Panc1 (cell line): ENCODE measurements at regions of chr3 and their contacts with region 1.

Region 1: DNA sequence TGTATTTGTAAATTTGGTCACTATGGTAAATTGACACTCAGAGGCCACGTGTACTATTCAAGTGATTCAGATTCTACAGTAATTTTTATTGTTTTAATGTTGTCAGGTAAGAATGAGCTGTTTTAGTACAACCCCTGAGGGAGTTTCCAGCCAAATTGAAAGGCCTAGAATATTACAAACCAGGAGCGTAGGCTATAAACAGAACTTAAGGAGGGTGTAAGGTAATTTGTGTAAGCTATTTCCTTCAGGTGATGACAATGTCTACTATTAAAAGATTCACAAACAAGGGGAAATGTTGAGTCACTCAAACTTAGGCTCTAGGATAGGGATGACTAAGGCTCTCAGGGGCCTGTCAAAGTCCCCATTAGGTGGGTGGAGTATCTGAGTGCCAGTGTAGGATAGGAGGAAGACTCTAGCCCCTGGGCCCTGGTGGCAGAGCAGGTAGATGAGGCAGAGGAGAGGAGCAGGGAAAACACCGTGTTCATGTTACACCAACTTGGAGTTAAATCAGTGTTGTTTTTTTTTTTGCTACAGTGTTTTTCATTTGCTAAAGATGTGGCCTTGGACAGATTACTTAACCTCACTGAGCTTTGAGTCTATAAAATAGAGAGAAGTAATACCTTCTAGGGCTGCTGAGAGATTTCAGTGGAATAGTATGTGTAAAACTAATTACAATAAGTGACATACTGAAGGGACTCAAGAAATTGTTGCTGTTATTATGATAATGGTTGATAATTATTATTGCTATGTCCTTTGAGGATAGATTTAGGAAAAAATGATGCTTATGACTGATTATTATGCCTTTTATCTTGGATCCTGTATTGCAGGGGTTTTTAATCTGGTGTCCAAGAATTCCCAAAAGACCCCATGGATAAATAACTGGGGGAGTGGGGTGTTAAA is 10.3 kb downstream of the TM4SF1 start:
- DNase-seq: peak; percentile 96
- ATAC-seq: peak; percentile 83
- H3K4me3 ChIP-seq: no peak overlapping the region
- H3K27ac ChIP-seq: peak overlapping the region; percentile 100
- H3K4me1 ChIP-seq: peaks cover 74% of the 10 kb centered on the region
- H3K27me3 ChIP-seq: no peaks in the 10 kb centered on the region
- CTCF ChIP-seq: no peak

Region 2: DNA sequence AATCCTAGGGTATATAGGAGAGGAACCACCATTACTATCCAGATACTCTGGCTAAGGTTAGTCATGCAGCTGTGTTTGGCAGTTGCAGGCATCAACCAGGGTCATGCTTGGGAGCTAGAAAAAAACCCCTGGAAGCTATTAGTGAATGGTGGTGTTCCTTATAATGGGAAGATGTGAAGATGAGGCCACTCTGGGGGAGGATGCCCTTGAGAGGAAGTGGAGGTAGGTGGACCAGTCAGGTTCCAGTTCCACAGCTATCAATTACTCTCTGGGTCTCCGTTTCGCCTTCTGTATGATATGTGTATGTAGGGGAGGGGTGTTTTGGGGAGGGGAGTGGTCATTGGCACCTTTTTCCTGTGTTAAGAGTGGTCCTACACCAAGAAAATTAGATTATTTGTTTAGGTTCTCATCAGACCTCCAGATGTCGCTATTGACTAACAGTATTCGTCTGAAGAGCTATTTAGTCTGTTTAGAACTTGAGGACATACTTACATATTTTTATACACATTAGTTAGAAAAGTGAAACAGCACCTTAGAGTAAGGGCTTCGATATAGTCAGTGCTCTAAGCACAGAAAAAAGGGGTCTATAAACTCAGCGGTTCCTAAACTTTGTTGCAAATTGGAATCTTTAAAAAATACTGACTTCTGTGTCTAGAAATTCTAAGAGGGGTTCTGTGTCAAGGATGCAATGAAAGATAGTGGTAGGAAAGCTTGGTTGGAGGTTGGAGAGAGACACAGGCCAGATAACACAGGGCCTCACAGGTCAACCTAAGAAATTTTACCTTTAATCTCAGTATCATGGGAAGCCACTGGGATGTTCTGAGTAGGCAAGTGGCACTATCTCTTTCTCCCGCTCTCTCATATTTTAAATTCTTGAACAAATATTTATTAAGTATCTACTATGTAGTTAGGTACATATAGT is 246.9 kb before region 1 on chr3:
- CTCF ChIA-PET with region 1: interaction called, 3 read pairs
- POLR2A ChIA-PET with region 1: interaction called, 10 read pairs
- in situ Hi-C with region 1: no loop called
- intact Hi-C with region 1: loop called (anchors 2 kb)
- DNase-seq: peak; percentile 76
- ATAC-seq: peak; percentile 87
- H3K4me3 ChIP-seq: no peak overlapping the region
- H3K27ac ChIP-seq: peak overlapping the region; percentile 79
- H3K4me1 ChIP-seq: peaks cover 4% of the 10 kb centered on the region
- H3K27me3 ChIP-seq: no peaks in the 10 kb centered on the region
- CTCF ChIP-seq: peak; percentile 75

Region 3: GRCh38 chr3:149299938-149300791 is 67.0 kb before region 1 on chr3:
- CTCF ChIA-PET with region 1: no interaction called
- POLR2A ChIA-PET with region 1: interaction called, 4 read pairs
- in situ Hi-C with region 1: no loop called
- intact Hi-C with region 1: loop called (anchors 5 kb)
- DNase-seq: peak; percentile 96
- ATAC-seq: peak; percentile 96
- H3K4me3 ChIP-seq: peak overlapping the region in 1 of 2 experiments; percentile 28; a peak in 2 of 4 replicates
- H3K27ac ChIP-seq: peak overlapping the region; percentile 99
- H3K4me1 ChIP-seq: peaks cover 41% of the 10 kb centered on the region
- H3K27me3 ChIP-seq: no peaks in the 10 kb centered on the region
- CTCF ChIP-seq: 0 out of 2 replicates have a peak, but pooled peaks have one; percentile 5

Region 4: DNA sequence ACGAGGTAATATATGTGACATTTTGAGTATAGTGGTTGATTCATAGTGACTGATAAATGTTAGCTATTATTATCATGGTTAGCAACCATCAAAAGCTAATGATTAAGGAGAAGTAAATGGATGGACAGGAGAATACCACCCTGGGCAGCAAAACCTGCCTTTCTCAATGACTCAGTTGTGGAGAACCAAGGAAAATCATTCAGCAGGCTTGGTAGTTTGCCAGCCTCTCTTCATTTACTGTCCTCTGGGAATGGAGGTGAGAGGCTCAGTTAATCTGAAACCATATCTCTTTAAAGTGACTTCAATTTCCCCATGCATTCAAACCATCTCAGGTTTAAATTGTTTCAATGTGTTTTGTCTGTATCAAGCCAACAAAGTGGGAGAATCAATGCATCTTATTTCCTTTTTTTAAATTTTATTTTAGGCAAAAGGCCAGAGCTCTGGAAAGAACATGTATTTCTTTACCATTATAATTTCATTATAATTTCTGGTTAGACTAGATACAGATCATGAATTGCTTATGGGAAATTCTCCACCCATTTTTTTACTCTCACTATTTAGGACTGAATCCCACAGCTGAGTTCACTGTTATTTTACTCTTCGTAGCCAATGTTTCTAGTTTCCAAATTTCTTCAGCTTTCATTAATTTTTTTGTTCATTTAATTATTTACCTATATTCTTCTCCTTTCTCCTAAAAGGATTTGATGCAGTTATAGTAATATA is 36.4 kb before region 1 on chr3:
- CTCF ChIA-PET with region 1: no interaction called
- POLR2A ChIA-PET with region 1: no interaction called
- in situ Hi-C with region 1: no loop called
- intact Hi-C with region 1: loop called (anchors 5 kb)
- DNase-seq: no peak
- ATAC-seq: no peak
- H3K4me3 ChIP-seq: no peak overlapping the region
- H3K27ac ChIP-seq: peak overlapping the region; percentile 100
- H3K4me1 ChIP-seq: peaks cover 45% of the 10 kb centered on the region
- H3K27me3 ChIP-seq: no peaks in the 10 kb centered on the region
- CTCF ChIP-seq: no peak

Region 5: DNA sequence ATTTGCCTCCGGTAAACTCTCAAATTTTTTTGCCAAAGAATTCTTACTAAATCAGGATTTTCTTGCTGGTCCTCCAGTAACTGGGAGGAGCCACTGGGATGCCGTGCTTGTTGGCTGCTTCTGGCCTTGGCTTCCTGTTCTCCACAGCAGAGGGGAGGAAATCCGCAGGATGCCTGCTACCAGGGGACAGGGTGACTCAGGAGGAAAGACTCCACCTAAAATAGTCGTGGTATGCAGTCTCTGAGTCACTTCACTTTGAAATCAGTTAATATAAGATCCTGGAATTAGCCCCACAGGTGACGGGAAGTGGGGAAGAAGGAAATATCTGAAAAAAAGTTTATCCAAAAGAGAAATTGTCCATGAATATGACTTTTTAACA is 27.3 kb before region 1 on chr3:
- CTCF ChIA-PET with region 1: interaction called, 5 read pairs
- POLR2A ChIA-PET with region 1: interaction called, 6 read pairs
- in situ Hi-C with region 1: no loop called
- intact Hi-C with region 1: loop called (anchors 2 kb)
- DNase-seq: peak; percentile 99
- ATAC-seq: peak; percentile 98
- H3K4me3 ChIP-seq: peak overlapping the region; percentile 4 to 27; a peak in 3 of 4 replicates
- H3K27ac ChIP-seq: peak overlapping the region; percentile 100
- H3K4me1 ChIP-seq: peaks cover 31% of the 10 kb centered on the region
- H3K27me3 ChIP-seq: no peaks in the 10 kb centered on the region
- CTCF ChIP-seq: no peak

Region 6: GRCh38 chr3:149428087-149428486 is 60.9 kb after region 1 on chr3:
- CTCF ChIA-PET with region 1: no interaction called
- POLR2A ChIA-PET with region 1: interaction called, 10 read pairs
- in situ Hi-C with region 1: no loop called
- intact Hi-C with region 1: no loop called
- DNase-seq: no peak
- ATAC-seq: no peak
- H3K4me3 ChIP-seq: no peak overlapping the region
- H3K27ac ChIP-seq: no peak overlapping the region
- H3K4me1 ChIP-seq: no peaks in the 10 kb centered on the region
- H3K27me3 ChIP-seq: no peaks in the 10 kb centered on the region
- CTCF ChIP-seq: no peak

Region 7: GRCh38 chr3:149547938-149548668 is 180.9 kb after region 1 on chr3:
- CTCF ChIA-PET with region 1: no interaction called
- POLR2A ChIA-PET with region 1: no interaction called
- in situ Hi-C with region 1: no loop called
- intact Hi-C with region 1: no loop called
- DNase-seq: peak; percentile 67
- ATAC-seq: peak; percentile 84
- H3K4me3 ChIP-seq: peak overlapping the region in 1 of 2 experiments; percentile 35; a peak in 3 of 4 replicates
- H3K27ac ChIP-seq: peak overlapping the region; percentile 100
- H3K4me1 ChIP-seq: peaks cover 92% of the 10 kb centered on the region
- H3K27me3 ChIP-seq: no peaks in the 10 kb centered on the region
- CTCF ChIP-seq: no peak

Region 8: DNA sequence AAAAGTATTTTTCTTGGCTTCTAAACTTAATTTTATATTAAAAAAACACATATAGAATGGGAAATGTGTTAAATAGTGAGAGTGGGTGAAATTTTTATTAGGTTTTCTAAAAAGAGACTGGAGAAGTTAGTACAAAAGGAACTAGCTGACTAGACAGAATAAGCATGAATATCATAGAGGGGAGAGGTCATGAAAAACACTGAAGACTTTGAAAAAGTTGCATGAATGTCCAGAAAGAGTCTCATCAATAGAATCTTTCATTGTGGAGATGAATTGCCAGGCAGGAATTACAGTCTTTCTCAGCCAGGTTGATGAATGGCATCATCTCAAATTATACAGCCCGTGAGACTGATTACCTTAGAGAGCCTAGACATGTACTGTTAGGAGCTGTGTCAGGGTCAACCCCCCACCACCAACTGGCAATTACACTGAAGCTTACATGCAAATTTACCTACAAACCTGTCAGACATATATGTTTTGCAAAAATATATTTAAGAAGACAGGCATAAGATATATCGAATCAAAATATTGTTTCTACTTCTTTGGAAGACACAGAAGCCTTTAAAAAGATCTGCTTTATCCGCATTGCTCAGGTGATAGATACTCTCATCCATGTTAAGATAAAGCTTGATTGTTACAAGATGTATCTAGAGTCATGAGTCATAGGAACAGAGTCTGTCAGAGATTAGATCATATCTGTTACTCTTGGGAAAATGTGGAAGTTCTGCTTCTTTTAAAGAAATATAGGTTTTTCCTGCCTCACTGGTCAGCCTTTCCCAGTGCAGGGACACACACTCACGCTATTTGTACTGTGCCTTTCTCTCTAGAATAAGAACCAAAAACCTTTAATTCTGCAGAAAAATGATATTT is 638.3 kb after region 1 on chr3:
- CTCF ChIA-PET with region 1: no interaction called
- POLR2A ChIA-PET with region 1: no interaction called
- in situ Hi-C with region 1: no loop called
- intact Hi-C with region 1: no loop called
- DNase-seq: no peak
- ATAC-seq: no peak
- H3K4me3 ChIP-seq: no peak overlapping the region
- H3K27ac ChIP-seq: no peak overlapping the region
- H3K4me1 ChIP-seq: no peaks in the 10 kb centered on the region
- H3K27me3 ChIP-seq: no peaks in the 10 kb centered on the region
- CTCF ChIP-seq: no peak